Sigmoid colon (tissue), 7 donors: ENCODE measurements at regions of chr12 and their contacts with region 1.

Region 1: GRCh38 chr12:26786865-26787514 is 46.0 kb downstream of the ITPR2 start:
- DNase-seq: no peak
- H3K4me3 ChIP-seq: no peak overlapping the region
- H3K27ac ChIP-seq: peak overlapping the region; percentile 40 to 78 (median 65)
- H3K4me1 ChIP-seq: peaks cover 0 to 67% (median 59%) of the 10 kb centered on the region in 4 donors
- H3K27me3 ChIP-seq: no peaks in the 10 kb centered on the region
- CTCF ChIP-seq: no peak
- EP300 ChIP-seq: no peak
- POLR2A ChIP-seq: no peak

Region 2: GRCh38 chr12:26195641-26196420 is 591.2 kb before region 1 on chr12:
- intact Hi-C with region 1: no loop called
- DNase-seq: peak; percentile 81
- H3K4me3 ChIP-seq: peak overlapping the region; percentile 42 to 76 (median 72)
- H3K27ac ChIP-seq: peak overlapping the region; percentile 89 to 94 (median 92)
- H3K4me1 ChIP-seq: peaks cover 0 to 45% (median 32%) of the 10 kb centered on the region in 4 donors
- H3K27me3 ChIP-seq: no peaks in the 10 kb centered on the region
- CTCF ChIP-seq: no peak
- EP300 ChIP-seq: no peak
- POLR2A ChIP-seq: no peak

Region 3: DNA sequence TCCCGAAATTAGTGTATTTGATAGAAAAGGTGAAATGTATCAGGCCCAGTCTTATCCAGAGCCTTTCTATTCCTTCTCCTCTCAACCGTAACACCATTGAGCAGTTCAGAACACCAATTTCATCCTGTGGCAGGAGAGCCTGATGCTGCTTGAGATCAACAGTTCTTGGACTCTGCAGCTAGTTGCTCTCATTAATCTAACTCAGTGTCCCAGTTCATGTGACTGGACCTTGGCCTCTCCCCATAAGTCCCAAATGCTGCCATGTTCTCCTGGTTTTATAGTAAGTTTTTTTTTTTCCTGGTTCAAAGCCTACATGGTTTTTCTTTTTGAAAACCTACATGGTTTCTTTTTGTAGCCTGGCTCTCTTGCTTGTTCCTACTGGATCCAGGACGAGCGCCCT is 247.9 kb before region 1 on chr12:
- intact Hi-C with region 1: no loop called
- DNase-seq: no peak
- H3K4me3 ChIP-seq: no peak overlapping the region
- H3K27ac ChIP-seq: no peak overlapping the region
- H3K4me1 ChIP-seq: no peaks in the 10 kb centered on the region
- H3K27me3 ChIP-seq: no peaks in the 10 kb centered on the region
- CTCF ChIP-seq: no peak
- EP300 ChIP-seq: no peak
- POLR2A ChIP-seq: no peak

Region 4: DNA sequence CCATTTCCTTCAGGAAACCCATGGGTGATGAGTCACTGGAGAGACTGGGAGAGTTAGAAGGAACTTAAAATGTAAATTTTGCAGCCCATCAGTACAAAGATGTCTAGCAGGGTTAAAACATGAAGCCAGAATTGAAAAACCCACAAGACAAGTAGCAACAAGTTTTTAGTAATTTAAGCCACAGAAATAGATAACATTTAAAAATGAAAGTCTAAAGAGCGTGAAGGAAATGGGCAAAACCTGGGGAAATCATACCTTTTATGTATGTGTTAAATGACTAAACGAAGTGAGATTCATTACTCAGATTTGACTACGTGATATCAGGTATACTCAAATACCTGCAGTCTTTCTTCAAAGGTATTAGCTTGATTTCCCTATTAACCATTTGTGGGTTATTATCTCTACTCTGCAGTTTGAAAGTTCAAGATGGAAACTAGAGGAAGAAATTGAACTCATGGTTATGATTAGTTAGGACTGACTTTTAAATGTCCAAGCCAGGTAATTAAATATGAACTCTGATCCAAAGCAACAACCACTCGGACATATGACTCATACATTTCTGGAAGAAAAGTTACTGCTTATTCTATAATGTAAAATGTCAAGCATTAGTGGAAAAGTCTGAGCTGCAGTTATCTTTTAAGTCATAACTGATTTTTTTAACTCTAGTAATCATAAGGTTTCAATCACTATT is 38.1 kb before region 1 on chr12:
- intact Hi-C with region 1: loop called (anchors 5 kb)
- DNase-seq: no peak
- H3K4me3 ChIP-seq: no peak overlapping the region
- H3K27ac ChIP-seq: peak overlapping the region in 1 of 4 donors; percentile 3
- H3K4me1 ChIP-seq: peaks cover 0 to 63% (median 49%) of the 10 kb centered on the region in 4 donors
- H3K27me3 ChIP-seq: no peaks in the 10 kb centered on the region
- CTCF ChIP-seq: no peak
- EP300 ChIP-seq: no peak
- POLR2A ChIP-seq: no peak

Region 5: GRCh38 chr12:26810330-26810729 is 23.3 kb after region 1 on chr12:
- intact Hi-C with region 1: no loop called
- DNase-seq: peak; percentile 73
- H3K4me3 ChIP-seq: no peak overlapping the region
- H3K27ac ChIP-seq: peak overlapping the region; percentile 20 to 67 (median 64)
- H3K4me1 ChIP-seq: peaks cover 0 to 22% (median 16%) of the 10 kb centered on the region in 4 donors
- H3K27me3 ChIP-seq: no peaks in the 10 kb centered on the region
- CTCF ChIP-seq: no peak
- EP300 ChIP-seq: no peak
- POLR2A ChIP-seq: no peak